OCI-LY7 (cell line): ENCODE measurements at regions of chr4 and their contacts with region 1.

Region 1: GRCh38 chr4:67575232-67575888 is 16.8 kb downstream of the STAP1 start:
- DNase-seq: peak; percentile 90
- H3K4me3 ChIP-seq: peak overlapping the region; percentile 61
- H3K27ac ChIP-seq: peak overlapping the region; percentile 99
- H3K4me1 ChIP-seq: peaks cover 66% of the 10 kb centered on the region
- CTCF ChIP-seq: no peak

Region 2: DNA sequence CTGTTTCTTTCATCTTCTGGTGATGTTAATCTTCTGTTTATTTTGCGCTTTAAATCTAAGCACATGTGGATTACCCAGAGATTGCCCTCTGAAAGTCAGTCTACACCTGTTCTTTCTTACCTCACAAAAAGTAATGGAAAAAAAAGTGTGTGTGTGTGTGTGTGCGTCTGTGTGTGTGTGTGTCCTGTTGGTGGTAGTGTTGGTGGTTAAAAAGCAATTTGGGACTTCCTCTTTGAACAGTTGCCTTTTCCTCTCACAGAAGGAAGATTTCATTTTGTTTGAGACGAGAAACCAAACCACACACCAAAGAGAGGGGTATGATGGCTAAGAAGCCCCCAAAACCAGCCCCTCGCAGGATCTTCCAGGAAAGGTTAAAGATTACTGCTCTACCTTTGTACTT is 16.9 kb before region 1 on chr4 and contains the start of gene STAP1:
- CTCF ChIA-PET with region 1: interaction called, 4 read pairs
- POLR2A ChIA-PET with region 1: interaction called, 30 read pairs
- intact Hi-C with region 1: loop called (anchors 1 kb)
- DNase-seq: peak; percentile 92
- H3K4me3 ChIP-seq: peak within 1 kb of the TSS; percentile 88
- H3K27ac ChIP-seq: peak within 1 kb of the TSS; percentile 83
- H3K4me1 ChIP-seq: peaks cover 56% of the 10 kb centered on the region
- CTCF ChIP-seq: peak; percentile 46; the same call in 1 of the 2 replicates
- total RNA-seq, gene STAP1: 88.4 and 91.1 TPM in 2 replicates

Region 3: DNA sequence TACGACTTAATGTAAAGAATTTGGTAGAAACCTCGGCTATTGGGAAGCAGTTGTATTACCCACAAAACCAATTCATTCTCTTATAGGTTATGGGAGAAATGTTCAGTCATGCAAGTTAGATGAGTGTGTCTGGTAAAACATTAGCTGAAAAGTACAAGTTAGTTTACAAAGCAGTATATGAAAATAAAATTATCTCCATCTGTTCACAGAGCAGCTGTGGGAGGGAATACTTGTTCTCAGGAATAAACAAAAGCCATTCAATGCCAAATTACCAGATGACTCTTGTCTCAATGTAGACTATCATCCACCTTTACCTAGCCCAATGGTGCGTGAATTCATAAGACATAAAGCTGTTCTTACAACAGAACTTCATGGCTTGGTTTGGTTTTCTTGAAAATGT is 11.8 kb after region 1 on chr4:
- CTCF ChIA-PET with region 1: no interaction called
- POLR2A ChIA-PET with region 1: interaction called, 10 read pairs
- intact Hi-C with region 1: no loop called
- DNase-seq: no peak
- H3K4me3 ChIP-seq: no peak overlapping the region
- H3K27ac ChIP-seq: no peak overlapping the region
- H3K4me1 ChIP-seq: no peaks in the 10 kb centered on the region
- CTCF ChIP-seq: no peak

Region 4: GRCh38 chr4:67700738-67701516 is 125.6 kb after region 1 on chr4 and contains the start of gene UBA6:
- CTCF ChIA-PET with region 1: no interaction called
- POLR2A ChIA-PET with region 1: interaction called, 9 read pairs
- intact Hi-C with region 1: loop called (anchors 1 kb)
- DNase-seq: peak; percentile 98
- H3K4me3 ChIP-seq: peak within 1 kb of the TSS; percentile 90
- H3K27ac ChIP-seq: peak within 1 kb of the TSS; percentile 65
- H3K4me1 ChIP-seq: peaks cover 34% of the 10 kb centered on the region
- CTCF ChIP-seq: peak; percentile 74
- total RNA-seq, gene UBA6: 40.6 and 49.3 TPM in 2 replicates

Region 5: DNA sequence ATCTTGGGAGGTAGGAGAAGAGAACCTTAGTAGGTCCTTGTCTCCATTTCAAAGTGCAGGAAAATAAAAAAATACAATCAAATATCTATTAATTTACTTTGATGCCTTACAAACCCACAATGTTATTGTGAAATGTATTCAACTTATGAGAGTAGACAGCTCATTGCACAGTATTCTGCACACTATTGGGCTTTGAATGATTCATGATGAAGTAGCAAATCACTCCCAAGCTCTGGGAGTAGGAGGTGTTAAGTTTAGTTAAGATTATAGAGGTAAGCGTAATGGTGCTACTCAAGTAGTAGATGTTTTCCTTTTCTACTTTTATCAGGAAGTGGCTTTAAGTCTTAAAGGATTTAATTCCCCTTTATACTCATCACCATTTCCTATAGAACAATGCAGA is 420.8 kb after region 1 on chr4:
- CTCF ChIA-PET with region 1: no interaction called
- POLR2A ChIA-PET with region 1: no interaction called
- intact Hi-C with region 1: no loop called
- DNase-seq: no peak
- H3K4me3 ChIP-seq: no peak overlapping the region
- H3K27ac ChIP-seq: no peak overlapping the region
- H3K4me1 ChIP-seq: no peaks in the 10 kb centered on the region
- CTCF ChIP-seq: no peak